AG04449 (cell line): ENCODE measurements at regions of chr1 and their contacts with region 1.

Region 1: GRCh38 chr1:156226116-156226538 is 13.3 kb downstream of the PMF1 start:
- DNase-seq: no peak
- H3K4me3 ChIP-seq: no peak overlapping the region
- CTCF ChIP-seq: no peak

Region 2: GRCh38 chr1:155934097-155934935 is 291.8 kb before region 1 on chr1 and contains the start of gene KHDC4:
- CTCF ChIA-PET with region 1: no interaction called
- POLR2A ChIA-PET with region 1: no interaction called
- DNase-seq: peak; percentile 86
- H3K4me3 ChIP-seq: peak within 1 kb of the TSS; percentile 90
- CTCF ChIP-seq: peak; percentile 11

Region 3: DNA sequence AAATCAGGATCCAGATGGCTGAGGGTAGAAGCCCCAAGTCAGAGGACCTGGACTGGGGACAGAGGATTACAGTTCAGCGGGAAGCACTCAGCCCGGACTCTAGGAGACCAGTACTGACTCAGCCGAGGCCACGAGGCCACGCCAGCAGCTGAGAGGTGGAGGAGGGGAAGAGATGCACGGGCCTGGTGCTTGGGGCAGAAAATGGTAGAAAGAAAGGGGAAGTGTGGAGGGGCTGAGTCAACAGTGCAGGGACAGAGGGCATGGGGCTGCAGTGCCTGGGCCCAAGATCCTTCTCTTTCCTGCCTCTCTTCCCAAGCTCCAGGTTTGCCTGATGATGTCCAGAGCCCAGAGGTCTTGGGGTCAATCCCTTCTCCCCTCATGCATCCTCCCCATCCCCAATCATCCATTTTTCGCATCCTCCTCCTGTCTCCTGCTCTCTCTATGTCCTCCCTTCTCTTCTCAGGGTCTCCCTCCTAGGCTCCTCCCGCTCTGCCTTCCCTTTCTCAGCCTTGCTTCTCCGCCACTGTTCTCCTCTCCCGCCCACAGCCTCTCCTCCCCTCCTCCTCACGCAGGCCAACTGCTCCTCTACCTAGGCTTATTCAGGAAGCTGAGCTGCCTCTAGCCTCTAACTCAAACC is 255.5 kb before region 1 on chr1:
- CTCF ChIA-PET with region 1: no interaction called
- POLR2A ChIA-PET with region 1: no interaction called
- DNase-seq: no peak
- H3K4me3 ChIP-seq: no peak overlapping the region; the same call in none of the 2 replicates
- CTCF ChIP-seq: no peak

Region 4: GRCh38 chr1:156096640-156097391 is 129.3 kb before region 1 on chr1:
- CTCF ChIA-PET with region 1: interaction called, 340 read pairs
- POLR2A ChIA-PET with region 1: no interaction called
- DNase-seq: no peak
- H3K4me3 ChIP-seq: peak overlapping the region; percentile 3; the same call in 1 of the 2 replicates
- CTCF ChIP-seq: peak; percentile 99

Region 5: GRCh38 chr1:156129706-156130581 is 96.2 kb before region 1 on chr1:
- CTCF ChIA-PET with region 1: interaction called, 53 read pairs
- POLR2A ChIA-PET with region 1: interaction called, 3 read pairs
- DNase-seq: peak; percentile 80
- H3K4me3 ChIP-seq: peak overlapping the region; percentile 26
- CTCF ChIP-seq: peak; percentile 96

Region 6: DNA sequence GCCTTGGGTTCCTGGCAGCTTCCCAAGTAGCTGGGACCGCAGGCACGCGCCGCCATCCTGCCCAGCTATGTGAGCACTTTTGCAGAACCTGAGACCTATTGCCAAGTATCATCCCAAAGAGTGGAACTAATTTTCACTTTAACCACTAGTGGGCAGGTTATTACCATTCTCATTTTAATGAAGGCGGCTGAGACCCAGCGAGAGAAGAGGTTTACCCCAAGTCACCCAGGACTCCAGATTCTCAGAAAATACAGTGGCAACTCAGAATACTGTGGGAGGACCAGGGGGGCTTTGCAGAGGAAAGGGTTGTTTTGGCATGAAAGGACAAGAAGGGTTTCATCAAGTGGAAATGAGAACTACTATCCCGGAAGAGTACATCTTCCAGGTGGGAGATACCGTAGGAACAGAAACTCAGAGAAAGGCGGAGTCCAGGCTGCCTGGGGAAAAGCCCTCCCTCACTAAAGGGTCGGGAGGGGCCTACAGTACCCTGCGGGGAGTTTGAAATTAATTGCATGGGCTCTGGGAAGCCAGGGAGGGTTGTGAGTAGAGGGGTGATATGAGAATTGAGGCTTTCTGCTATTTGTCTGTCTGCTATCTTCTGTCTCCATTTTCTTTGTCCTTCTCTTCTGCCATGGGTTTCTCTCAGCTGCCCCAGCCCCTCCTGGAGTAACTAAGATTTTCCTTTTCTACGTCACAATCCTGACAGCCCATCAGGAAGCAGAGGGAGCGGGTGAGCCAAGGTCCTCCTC is 79.9 kb before region 1 on chr1:
- CTCF ChIA-PET with region 1: interaction called, 214 read pairs
- POLR2A ChIA-PET with region 1: interaction called, 3 read pairs
- DNase-seq: peak; percentile 85
- H3K4me3 ChIP-seq: no peak overlapping the region
- CTCF ChIP-seq: peak; percentile 53

Region 7: DNA sequence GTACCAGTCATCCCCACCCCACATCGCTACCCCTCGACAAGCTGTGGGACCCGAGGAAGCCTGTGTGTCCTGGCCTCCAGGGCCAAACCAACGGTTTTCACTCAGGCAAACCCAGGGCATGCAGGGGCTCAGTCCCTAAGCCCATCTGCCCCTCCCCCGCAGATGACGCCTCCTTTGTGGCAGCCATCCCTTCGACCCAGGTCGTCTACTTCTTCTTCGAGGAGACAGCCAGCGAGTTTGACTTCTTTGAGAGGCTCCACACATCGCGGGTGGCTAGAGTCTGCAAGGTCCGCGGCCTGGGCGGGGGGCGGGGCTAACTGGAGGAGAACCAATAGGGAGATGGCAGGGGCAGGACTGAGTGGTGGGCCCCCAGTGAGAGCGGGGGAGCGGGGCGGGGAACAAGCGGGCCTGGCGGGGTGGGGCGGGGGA is 65.4 kb before region 1 on chr1:
- CTCF ChIA-PET with region 1: interaction called, 22 read pairs
- POLR2A ChIA-PET with region 1: no interaction called
- DNase-seq: no peak
- H3K4me3 ChIP-seq: peak overlapping the region; percentile 47
- CTCF ChIP-seq: no peak

Region 8: GRCh38 chr1:156212833-156213643 is 13.1 kb before region 1 on chr1 and contains the start of gene PMF1:
- CTCF ChIA-PET with region 1: interaction called, 43 read pairs
- POLR2A ChIA-PET with region 1: interaction called, 4 read pairs
- DNase-seq: peak; percentile 75
- H3K4me3 ChIP-seq: peak within 1 kb of the TSS; percentile 96
- CTCF ChIP-seq: no peak

Region 9: DNA sequence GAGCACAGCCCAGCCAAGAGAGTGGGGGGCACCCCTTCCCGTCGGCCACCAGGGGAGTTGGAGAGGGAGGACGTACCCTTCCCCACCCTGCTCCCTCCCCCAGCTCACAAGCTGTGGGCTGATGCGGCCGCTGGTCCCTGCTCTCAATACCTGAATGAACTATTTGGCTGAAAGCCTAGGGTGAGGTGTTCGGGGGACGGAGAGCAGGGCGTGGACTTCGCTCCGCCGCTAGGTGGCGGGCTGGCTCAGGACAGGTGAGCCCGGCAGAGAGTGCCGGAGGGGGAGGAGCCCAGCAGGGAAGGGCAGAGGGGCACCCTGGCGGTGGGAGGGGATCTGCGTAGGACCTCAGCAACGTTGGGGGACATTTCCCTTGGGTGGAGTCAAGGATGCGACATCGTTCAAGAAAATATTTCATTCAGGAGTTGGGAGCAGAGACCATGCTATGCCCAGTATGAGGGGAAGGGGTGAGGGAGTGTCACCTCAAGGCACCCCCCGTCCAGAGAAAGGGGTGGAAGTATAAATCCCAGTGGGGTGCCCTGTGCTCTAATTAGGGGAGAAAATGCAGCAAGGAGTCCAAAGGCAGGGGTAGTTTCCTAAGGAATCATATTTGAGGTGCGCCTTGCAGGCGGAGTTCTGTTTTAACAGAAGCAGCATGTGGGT is 130.9 kb after region 1 on chr1:
- CTCF ChIA-PET with region 1: interaction called, 29 read pairs
- POLR2A ChIA-PET with region 1: no interaction called
- DNase-seq: no peak
- H3K4me3 ChIP-seq: no peak overlapping the region
- CTCF ChIP-seq: no peak